Upper lobe of right lung (tissue), 1 donor: ENCODE measurements at regions of chr5 and their contacts with region 1.

Region 1: GRCh38 chr5:141960449-141961202 is 2.6 kb upstream of the PCDH12 start:
- DNase-seq: peak; percentile 89
- ATAC-seq: peak; percentile 91
- H3K4me3 ChIP-seq: no peak overlapping the region
- H3K27ac ChIP-seq: peak overlapping the region; percentile 13
- H3K4me1 ChIP-seq: peaks cover 20% of the 10 kb centered on the region
- H3K27me3 ChIP-seq: no peaks in the 10 kb centered on the region
- CTCF ChIP-seq: peak; percentile 89

Region 2: DNA sequence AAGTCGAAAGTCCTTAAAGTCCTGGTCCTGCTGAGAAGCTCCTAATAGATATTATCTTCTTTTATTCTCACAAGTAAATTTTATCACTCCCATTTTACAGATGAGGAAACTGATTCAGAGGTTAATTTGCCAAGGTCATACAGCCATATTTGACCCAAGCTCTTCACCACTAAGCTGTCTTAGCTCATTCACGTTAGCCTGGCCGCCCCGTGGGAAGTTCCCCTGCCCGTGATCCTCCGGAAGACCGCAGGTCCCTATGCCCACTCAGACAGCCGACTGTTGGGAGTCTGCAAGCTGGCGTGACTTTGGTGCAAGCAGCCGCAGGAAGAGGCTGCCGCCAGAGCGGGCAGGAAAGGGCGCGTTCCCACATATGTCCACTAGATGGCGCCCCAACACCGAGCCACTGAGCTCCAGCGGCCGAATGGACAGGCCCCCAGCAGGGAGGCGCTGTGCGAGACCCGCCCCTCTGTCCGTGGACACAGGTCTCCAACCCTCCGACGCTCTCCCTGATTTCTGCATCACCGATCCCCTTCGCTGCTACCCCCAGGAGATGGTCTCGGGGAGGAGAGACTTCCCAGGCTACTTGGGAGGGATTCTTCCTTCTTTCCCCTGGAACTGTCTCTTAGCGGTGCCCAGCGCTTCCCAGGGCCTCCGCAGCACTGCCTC is 268.6 kb before region 1 on chr5:
- intact Hi-C with region 1: loop called (anchors 5 kb)
- DNase-seq: peak; percentile 92
- ATAC-seq: peak; percentile 97
- H3K4me3 ChIP-seq: peak overlapping the region; percentile 37
- H3K27ac ChIP-seq: no peak overlapping the region
- H3K4me1 ChIP-seq: peaks cover 9% of the 10 kb centered on the region
- H3K27me3 ChIP-seq: no peaks in the 10 kb centered on the region
- CTCF ChIP-seq: peak; percentile 99